MCF 10A (cell line): ENCODE measurements at regions of chr14 and their contacts with region 1.

Region 1: DNA sequence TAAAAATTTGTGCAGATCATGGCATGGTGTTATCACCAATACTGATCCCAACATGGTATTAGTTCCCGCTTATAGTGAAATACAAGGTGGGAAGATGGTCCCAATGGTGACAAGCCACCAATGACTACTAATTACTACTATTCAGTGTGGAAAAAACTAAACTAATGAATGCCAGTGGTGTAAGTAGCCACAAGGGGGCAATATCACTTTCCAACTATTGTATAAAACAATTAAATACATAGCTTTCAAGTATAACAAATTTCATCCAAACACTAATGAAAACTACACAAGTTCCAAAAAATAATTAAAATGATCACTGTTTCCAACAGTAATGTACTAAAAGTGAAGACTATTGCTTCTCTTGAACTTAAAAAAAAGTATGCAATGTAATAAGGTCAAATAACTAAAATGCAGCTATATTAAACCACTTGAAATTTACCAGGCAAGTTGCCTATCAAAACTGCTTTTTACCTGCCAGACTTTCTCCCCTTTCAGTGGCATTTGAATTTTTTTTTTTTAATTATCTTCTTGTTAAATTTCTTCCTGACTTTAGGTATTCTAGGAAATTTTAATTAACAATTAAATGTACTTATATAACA is 58.0 kb downstream of the PAPLN start:
- DNase-seq: peak; percentile 52
- H3K4me3 Mint-ChIP-seq: no peak overlapping the region
- H3K27ac Mint-ChIP-seq: no peak overlapping the region
- H3K4me1 Mint-ChIP-seq: no peaks in the 10 kb centered on the region
- H3K27me3 Mint-ChIP-seq: no peaks in the 10 kb centered on the region
- CTCF ChIP-seq: peak; percentile 52

Region 2: GRCh38 chr14:73283608-73284379 is 11.5 kb before region 1 on chr14:
- CTCF ChIA-PET with region 1: interaction called, 13 read pairs
- POLR2A ChIA-PET with region 1: no interaction called
- intact Hi-C with region 1: no loop called
- DNase-seq: no peak
- H3K4me3 Mint-ChIP-seq: no peak overlapping the region
- H3K27ac Mint-ChIP-seq: no peak overlapping the region
- H3K4me1 Mint-ChIP-seq: no peaks in the 10 kb centered on the region
- H3K27me3 Mint-ChIP-seq: no peaks in the 10 kb centered on the region
- CTCF ChIP-seq: no peak

Region 3: GRCh38 chr14:73344319-73344718 is 49.0 kb after region 1 on chr14:
- CTCF ChIA-PET with region 1: interaction called, 12 read pairs
- POLR2A ChIA-PET with region 1: interaction called, 3 read pairs
- intact Hi-C with region 1: no loop called
- DNase-seq: no peak
- H3K4me3 Mint-ChIP-seq: no peak overlapping the region
- H3K27ac Mint-ChIP-seq: no peak overlapping the region
- H3K4me1 Mint-ChIP-seq: no peaks in the 10 kb centered on the region
- H3K27me3 Mint-ChIP-seq: no peaks in the 10 kb centered on the region
- CTCF ChIP-seq: no peak

Region 4: GRCh38 chr14:73472185-73473114 is 177.2 kb after region 1 on chr14:
- CTCF ChIA-PET with region 1: interaction called, 79 read pairs
- POLR2A ChIA-PET with region 1: interaction called, 13 read pairs
- intact Hi-C with region 1: loop called (anchors 1 kb)
- DNase-seq: peak; percentile 67
- H3K4me3 Mint-ChIP-seq: no peak overlapping the region
- H3K27ac Mint-ChIP-seq: no peak overlapping the region
- H3K4me1 Mint-ChIP-seq: peaks cover 5% of the 10 kb centered on the region
- H3K27me3 Mint-ChIP-seq: no peaks in the 10 kb centered on the region
- CTCF ChIP-seq: peak; percentile 68

Region 5: DNA sequence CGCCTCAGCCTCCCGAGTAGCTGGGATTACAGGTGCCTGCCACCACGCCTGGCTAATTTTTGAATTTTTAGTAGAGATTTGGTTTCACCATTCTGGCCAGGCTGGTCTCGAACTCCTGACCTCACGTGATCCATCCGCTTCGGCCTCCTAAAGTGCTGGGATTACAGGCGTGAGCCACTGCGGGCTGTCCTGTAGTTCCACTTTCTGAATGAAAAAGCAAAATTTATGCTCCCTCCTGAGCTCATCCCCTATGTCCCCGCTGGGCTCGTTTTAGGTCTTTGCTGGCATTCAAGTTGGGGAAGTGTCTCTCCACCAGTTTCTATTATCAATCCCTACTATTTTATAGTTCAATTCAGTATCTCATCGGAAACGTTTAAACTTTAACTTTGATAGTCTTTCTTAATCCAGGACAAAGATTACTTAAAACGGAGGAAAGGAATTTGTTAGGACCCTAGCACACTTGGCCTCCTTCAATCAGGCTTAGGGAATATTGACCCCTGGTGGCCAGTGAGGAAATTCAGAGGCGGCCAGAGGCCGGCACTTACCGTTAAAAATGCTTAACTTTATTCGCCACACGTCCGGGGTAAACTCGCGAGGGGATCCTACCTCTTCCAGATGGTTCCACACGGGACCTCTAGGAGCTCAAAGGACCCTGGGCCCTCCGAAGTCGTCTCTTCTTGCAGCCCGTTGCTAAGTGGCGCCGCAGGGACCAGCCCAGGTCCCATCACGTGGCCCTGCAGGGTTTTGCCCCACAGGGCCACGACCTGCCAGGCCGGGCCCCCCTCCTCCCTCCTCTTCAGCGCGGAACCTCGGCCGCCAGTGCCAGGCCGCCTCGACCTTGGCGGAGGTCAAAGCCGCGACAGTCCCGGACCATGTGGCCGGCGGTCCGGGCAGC is 338.1 kb after region 1 on chr14:
- CTCF ChIA-PET with region 1: interaction called, 3 read pairs
- POLR2A ChIA-PET with region 1: no interaction called
- intact Hi-C with region 1: loop called (anchors 1 kb)
- DNase-seq: peak; percentile 80
- H3K4me3 Mint-ChIP-seq: peak overlapping the region; percentile 60
- H3K27ac Mint-ChIP-seq: no peak overlapping the region
- H3K4me1 Mint-ChIP-seq: peaks cover 4% of the 10 kb centered on the region
- H3K27me3 Mint-ChIP-seq: no peaks in the 10 kb centered on the region
- CTCF ChIP-seq: peak; percentile 87